Uterus (tissue), 4 donors: ENCODE measurements at regions of chr6 and their contacts with region 1.

Region 1: GRCh38 chr6:108558372-108559096 is 2.2 kb upstream of the FOXO3 start:
- DNase-seq: peak; percentile 98 to 99
- H3K4me3 ChIP-seq: peak overlapping the region; percentile 86
- H3K27ac ChIP-seq: peak overlapping the region; percentile 99 to 100
- H3K4me1 ChIP-seq: no peaks in the 10 kb centered on the region
- H3K27me3 ChIP-seq: no peaks in the 10 kb centered on the region
- CTCF ChIP-seq: peak in 1 of 4 experiments; percentile 33
- POLR2A ChIP-seq: peak; percentile 81 to 92

Region 2: GRCh38 chr6:108438918-108439317 is 119.6 kb before region 1 on chr6:
- intact Hi-C with region 1: no loop called
- DNase-seq: no peak
- H3K4me3 ChIP-seq: no peak overlapping the region
- H3K27ac ChIP-seq: no peak overlapping the region
- H3K4me1 ChIP-seq: no peaks in the 10 kb centered on the region
- H3K27me3 ChIP-seq: no peaks in the 10 kb centered on the region
- CTCF ChIP-seq: no peak
- POLR2A ChIP-seq: no peak

Region 3: GRCh38 chr6:108510461-108511319 is 47.8 kb before region 1 on chr6:
- intact Hi-C with region 1: no loop called
- DNase-seq: no peak
- H3K4me3 ChIP-seq: no peak overlapping the region
- H3K27ac ChIP-seq: no peak overlapping the region
- H3K4me1 ChIP-seq: no peaks in the 10 kb centered on the region
- H3K27me3 ChIP-seq: no peaks in the 10 kb centered on the region
- CTCF ChIP-seq: no peak
- POLR2A ChIP-seq: no peak

Region 4: DNA sequence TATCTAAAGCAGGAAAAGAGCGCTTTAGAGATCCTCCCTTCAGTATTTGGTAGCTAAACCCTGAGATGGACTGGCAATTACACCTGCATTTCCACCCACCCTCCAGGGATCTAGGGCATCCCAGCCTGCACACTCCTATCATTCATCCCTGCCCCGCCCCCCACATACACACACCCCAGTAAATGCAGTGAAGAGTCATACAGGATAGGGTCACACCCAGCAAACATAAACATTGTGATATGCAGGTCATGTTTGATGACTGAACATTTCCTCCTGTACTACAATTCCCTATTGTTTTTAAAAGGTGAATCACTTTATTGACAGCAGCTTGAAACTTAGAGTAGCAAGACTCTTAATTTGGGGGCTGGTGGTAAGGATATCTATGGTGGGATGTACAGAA is 115.1 kb after region 1 on chr6:
- intact Hi-C with region 1: loop called (anchors 10 kb)
- DNase-seq: no peak
- H3K4me3 ChIP-seq: no peak overlapping the region
- H3K27ac ChIP-seq: no peak overlapping the region
- H3K4me1 ChIP-seq: peaks cover 19 to 20% of the 10 kb centered on the region in 2 donors
- H3K27me3 ChIP-seq: no peaks in the 10 kb centered on the region
- CTCF ChIP-seq: no peak
- POLR2A ChIP-seq: no peak

Region 5: GRCh38 chr6:108782179-108783041 is 223.9 kb after region 1 on chr6:
- intact Hi-C with region 1: loop called (anchors 5 kb)
- DNase-seq: peak; percentile 84
- H3K4me3 ChIP-seq: peak overlapping the region; percentile 13 to 39
- H3K27ac ChIP-seq: peak overlapping the region; percentile 65
- H3K4me1 ChIP-seq: no peaks in the 10 kb centered on the region
- H3K27me3 ChIP-seq: no peaks in the 10 kb centered on the region
- CTCF ChIP-seq: peak; percentile 68 to 84 (median 70)
- POLR2A ChIP-seq: no peak

Region 6: GRCh38 chr6:109073344-109074132 is 515.0 kb after region 1 on chr6:
- intact Hi-C with region 1: loop called (anchors 5 kb)
- DNase-seq: peak; percentile 24 to 63
- H3K4me3 ChIP-seq: no peak overlapping the region
- H3K27ac ChIP-seq: no peak overlapping the region
- H3K4me1 ChIP-seq: no peaks in the 10 kb centered on the region
- H3K27me3 ChIP-seq: no peaks in the 10 kb centered on the region
- CTCF ChIP-seq: peak; percentile 64 to 81 (median 75)
- POLR2A ChIP-seq: no peak